Sigmoid colon (tissue), 7 donors: ENCODE measurements at regions of chr15 and their contacts with region 1.

Region 1: GRCh38 chr15:63048115-63048775 is 5.7 kb downstream of the TPM1 start:
- DNase-seq: peak; percentile 96
- H3K4me3 ChIP-seq: peak overlapping the region; percentile 78 to 90 (median 87)
- H3K27ac ChIP-seq: peak overlapping the region; percentile 97 to 99 (median 98)
- H3K4me1 ChIP-seq: peaks cover 0 to 56% (median 46%) of the 10 kb centered on the region in 4 donors
- H3K27me3 ChIP-seq: no peaks in the 10 kb centered on the region
- CTCF ChIP-seq: peak; percentile 85 to 97 (median 89)
- EP300 ChIP-seq: no peak
- POLR2A ChIP-seq: peak in 1 of 2 donors; percentile 11

Region 2: GRCh38 chr15:62482785-62483429 is 565.3 kb before region 1 on chr15:
- intact Hi-C with region 1: no loop called
- DNase-seq: no peak
- H3K4me3 ChIP-seq: no peak overlapping the region
- H3K27ac ChIP-seq: no peak overlapping the region
- H3K4me1 ChIP-seq: peaks cover 0 to 23% (median 11%) of the 10 kb centered on the region in 4 donors
- H3K27me3 ChIP-seq: no peaks in the 10 kb centered on the region
- CTCF ChIP-seq: no peak
- EP300 ChIP-seq: no peak
- POLR2A ChIP-seq: no peak

Region 3: GRCh38 chr15:63082366-63082765 is 34.1 kb after region 1 on chr15:
- intact Hi-C with region 1: loop called (anchors 1 kb)
- DNase-seq: no peak
- H3K4me3 ChIP-seq: no peak overlapping the region
- H3K27ac ChIP-seq: peak overlapping the region in 2 of 4 donors; percentile 73 to 81
- H3K4me1 ChIP-seq: peaks cover 0 to 32% (median 28%) of the 10 kb centered on the region in 4 donors
- H3K27me3 ChIP-seq: no peaks in the 10 kb centered on the region
- CTCF ChIP-seq: no peak
- EP300 ChIP-seq: no peak
- POLR2A ChIP-seq: no peak

Region 4: GRCh38 chr15:63093486-63094205 is 45.4 kb after region 1 on chr15:
- intact Hi-C with region 1: loop called (anchors 1 kb)
- DNase-seq: peak; percentile 90
- H3K4me3 ChIP-seq: no peak overlapping the region
- H3K27ac ChIP-seq: peak overlapping the region; percentile 51 to 71 (median 69)
- H3K4me1 ChIP-seq: peaks cover 0 to 31% (median 29%) of the 10 kb centered on the region in 4 donors
- H3K27me3 ChIP-seq: no peaks in the 10 kb centered on the region
- CTCF ChIP-seq: peak; percentile 71 to 92 (median 86)
- EP300 ChIP-seq: no peak
- POLR2A ChIP-seq: no peak

Region 5: DNA sequence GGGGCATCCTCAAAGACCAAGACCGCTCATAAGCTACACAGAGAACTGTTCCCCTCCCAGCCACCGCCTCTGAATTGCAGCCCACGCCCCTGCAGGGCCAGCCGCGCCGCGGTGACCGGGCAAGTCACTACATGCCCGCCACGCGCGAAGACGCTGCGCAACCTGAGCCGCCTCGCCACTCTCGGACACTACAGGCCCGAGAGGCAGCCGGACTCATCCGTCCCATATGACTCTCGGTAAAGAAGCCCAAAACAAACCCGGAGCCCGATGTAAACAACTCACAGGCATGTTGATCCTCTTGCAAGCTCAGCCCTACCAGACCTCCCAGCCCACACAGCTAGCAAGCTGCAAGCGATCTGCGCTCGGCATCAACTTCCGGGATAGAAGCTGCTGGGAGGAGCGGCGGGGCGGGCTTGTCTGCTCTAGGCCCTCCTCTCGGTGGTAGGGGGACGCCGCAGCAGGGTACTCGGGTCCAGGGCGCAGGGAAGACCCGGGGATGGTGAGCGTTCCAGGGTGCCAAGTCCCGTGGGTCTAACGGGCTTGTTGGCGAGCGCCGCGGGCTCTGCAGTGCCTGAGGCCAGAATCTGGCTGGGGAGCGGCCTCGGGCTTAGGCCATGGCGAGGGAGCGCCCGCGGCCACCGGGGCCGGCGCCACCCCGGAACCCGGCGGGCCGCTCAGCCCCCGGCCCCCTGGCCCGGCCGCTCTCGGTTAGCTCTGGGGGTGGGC is 109.0 kb after region 1 on chr15 and contains the start of gene RPS27L:
- intact Hi-C with region 1: no loop called
- DNase-seq: peak; percentile 95
- H3K4me3 ChIP-seq: peak within 1 kb of the TSS; percentile 78 to 93 (median 89)
- H3K27ac ChIP-seq: peak within 1 kb of the TSS; percentile 93 to 99 (median 97)
- H3K4me1 ChIP-seq: peaks cover 0 to 22% (median 18%) of the 10 kb centered on the region in 4 donors
- H3K27me3 ChIP-seq: no peaks in the 10 kb centered on the region
- CTCF ChIP-seq: no peak
- EP300 ChIP-seq: no peak
- POLR2A ChIP-seq: peak; percentile 84 to 90
- total RNA-seq, gene RPS27L: 63.3 to 200 (median 143) TPM

Region 6: GRCh38 chr15:63402498-63403253 is 354.4 kb after region 1 on chr15:
- intact Hi-C with region 1: no loop called
- DNase-seq: no peak
- H3K4me3 ChIP-seq: no peak overlapping the region
- H3K27ac ChIP-seq: no peak overlapping the region
- H3K4me1 ChIP-seq: no peaks in the 10 kb centered on the region
- H3K27me3 ChIP-seq: no peaks in the 10 kb centered on the region
- CTCF ChIP-seq: peak; percentile 5 to 69 (median 59)
- EP300 ChIP-seq: no peak
- POLR2A ChIP-seq: no peak